Activated B cell treated with CpG ODN at 0.5 μM for 24 hours (primary cell): ENCODE measurements at regions of chr16 and their contacts with region 1.

Region 1: DNA sequence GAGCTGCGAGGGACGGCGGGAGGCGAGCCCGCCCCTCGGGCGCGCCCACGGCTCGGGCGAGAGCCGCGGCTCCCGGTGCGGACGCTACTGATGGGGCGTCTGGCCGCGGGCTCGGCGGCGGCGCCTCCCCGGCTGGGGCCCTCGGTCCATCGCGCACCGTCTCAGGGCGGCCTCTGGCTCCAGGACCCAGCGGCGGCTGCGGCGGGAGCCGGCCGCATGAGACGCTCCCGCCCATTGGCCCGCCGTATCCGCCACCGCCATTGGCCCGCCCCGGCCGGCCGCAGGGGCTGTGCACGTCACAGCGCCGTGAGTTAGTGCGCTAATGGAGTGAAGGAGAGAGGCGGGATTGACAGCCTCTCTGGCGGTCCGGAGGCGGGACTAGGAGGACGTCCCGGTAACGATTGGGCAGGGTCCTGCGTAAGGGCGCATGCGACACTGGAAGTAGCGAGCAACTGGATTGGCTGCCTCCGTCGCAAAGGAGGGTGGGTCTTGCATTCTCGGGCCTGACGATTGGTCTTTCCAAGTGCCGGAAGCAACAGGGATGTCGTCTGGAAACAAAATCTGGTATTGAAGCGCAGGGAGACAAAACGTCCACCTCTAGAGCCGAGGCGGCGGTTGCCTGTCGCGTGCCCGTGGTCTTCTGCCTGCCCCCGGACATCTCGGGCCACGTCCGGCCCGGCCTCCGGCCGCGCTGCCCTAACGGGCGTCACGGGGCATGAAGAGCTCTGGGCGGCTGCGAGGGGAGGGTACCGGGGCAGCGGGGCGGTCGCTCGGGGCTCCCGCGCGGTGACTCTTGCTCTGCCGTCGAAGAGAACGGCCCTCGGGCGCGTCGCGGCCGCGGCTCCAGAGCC is at the start of gene ANKRD11:
- DNase-seq: peak; percentile 99
- ATAC-seq: peak; percentile 80
- H3K4me3 Mint-ChIP-seq: peak within 1 kb of the TSS; percentile 91
- H3K27ac Mint-ChIP-seq: peak within 1 kb of the TSS; percentile 97
- H3K4me1 Mint-ChIP-seq: peaks cover 58% of the 10 kb centered on the region
- H3K27me3 Mint-ChIP-seq: no peaks in the 10 kb centered on the region
- CTCF ChIP-seq: no peak
- total RNA-seq, gene ANKRD11: 216 and 243 TPM in 2 replicates

Region 2: GRCh38 chr16:89246903-89247733 is 243.5 kb before region 1 on chr16:
- CTCF ChIA-PET with region 1: no interaction called
- POLR2A ChIA-PET with region 1: no interaction called
- intact Hi-C with region 1: loop called (anchors 1 kb)
- DNase-seq: peak; percentile 92
- ATAC-seq: peak; percentile 97
- H3K4me3 Mint-ChIP-seq: peak overlapping the region; percentile 72
- H3K27ac Mint-ChIP-seq: no peak overlapping the region
- H3K4me1 Mint-ChIP-seq: peaks cover 13% of the 10 kb centered on the region
- H3K27me3 Mint-ChIP-seq: no peaks in the 10 kb centered on the region
- CTCF ChIP-seq: no peak

Region 3: DNA sequence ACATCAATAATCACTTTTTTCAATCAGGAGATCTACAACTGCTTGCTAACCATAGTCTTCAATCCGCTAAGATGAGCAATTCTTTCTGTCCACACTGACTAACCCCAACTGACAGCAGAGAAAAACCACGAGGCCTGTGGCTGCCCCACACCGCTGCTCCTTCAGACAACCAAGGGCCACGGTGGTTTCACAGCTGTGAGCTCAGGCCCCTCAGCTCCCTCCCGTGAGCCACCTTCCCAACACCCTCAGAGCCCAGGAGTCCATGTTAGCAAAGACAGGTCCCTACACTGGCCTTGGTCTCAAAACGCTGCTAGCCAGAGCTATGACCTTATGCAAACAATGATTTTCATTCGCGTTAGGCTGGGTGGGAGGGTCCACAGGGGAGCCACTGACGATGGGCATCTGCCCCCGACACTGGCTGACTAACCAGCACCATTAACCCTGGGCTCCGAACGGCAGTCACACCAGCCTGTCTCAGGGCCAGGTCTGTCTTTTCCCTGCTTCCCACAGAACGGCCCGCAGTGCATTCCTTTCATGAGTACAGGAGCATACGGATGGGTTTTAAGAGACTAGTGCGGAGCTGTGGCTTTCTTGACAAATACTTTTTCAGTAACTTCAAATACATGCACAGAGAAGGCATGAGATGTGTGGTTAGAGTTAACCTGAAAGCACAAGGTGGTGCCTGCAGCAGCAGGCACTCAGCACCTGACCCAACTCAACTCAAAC is 67.5 kb before region 1 on chr16:
- CTCF ChIA-PET with region 1: no interaction called
- POLR2A ChIA-PET with region 1: interaction called, 15 read pairs
- intact Hi-C with region 1: loop called (anchors 2 kb)
- DNase-seq: no peak
- ATAC-seq: peak; percentile 77
- H3K4me3 Mint-ChIP-seq: peak overlapping the region; percentile 67
- H3K27ac Mint-ChIP-seq: peak overlapping the region; percentile 71
- H3K4me1 Mint-ChIP-seq: peaks cover 75% of the 10 kb centered on the region
- H3K27me3 Mint-ChIP-seq: no peaks in the 10 kb centered on the region
- CTCF ChIP-seq: no peak

Region 4: GRCh38 chr16:89453501-89454321 is 36.9 kb before region 1 on chr16:
- CTCF ChIA-PET with region 1: no interaction called
- POLR2A ChIA-PET with region 1: interaction called, 5 read pairs
- intact Hi-C with region 1: loop called (anchors 1 kb)
- DNase-seq: no peak
- ATAC-seq: no peak
- H3K4me3 Mint-ChIP-seq: no peak overlapping the region
- H3K27ac Mint-ChIP-seq: peak overlapping the region; percentile 51
- H3K4me1 Mint-ChIP-seq: peaks cover 68% of the 10 kb centered on the region
- H3K27me3 Mint-ChIP-seq: no peaks in the 10 kb centered on the region
- CTCF ChIP-seq: no peak

Region 5: GRCh38 chr16:89476804-89477261 is 13.8 kb before region 1 on chr16:
- CTCF ChIA-PET with region 1: interaction called, 5 read pairs
- POLR2A ChIA-PET with region 1: interaction called, 62 read pairs
- intact Hi-C with region 1: loop called (anchors 1 kb)
- DNase-seq: peak; percentile 29
- ATAC-seq: peak; percentile 92
- H3K4me3 Mint-ChIP-seq: peak overlapping the region; percentile 69
- H3K27ac Mint-ChIP-seq: peak overlapping the region; percentile 74
- H3K4me1 Mint-ChIP-seq: peaks cover 86% of the 10 kb centered on the region
- H3K27me3 Mint-ChIP-seq: no peaks in the 10 kb centered on the region
- CTCF ChIP-seq: no peak